Testis (tissue), 5 donors: ENCODE measurements at regions of chr2 and their contacts with region 1.

Region 1: GRCh38 chr2:113138428-113139322 is 11.3 kb downstream of the IL1RN start:
- DNase-seq: peak; percentile 63
- H3K4me3 ChIP-seq: no peak overlapping the region
- H3K27ac ChIP-seq: no peak overlapping the region
- H3K4me1 ChIP-seq: no peaks in the 10 kb centered on the region
- H3K27me3 ChIP-seq: no peaks in the 10 kb centered on the region
- CTCF ChIP-seq: peak; percentile 70 to 89 (median 80)
- POLR2A ChIP-seq: no peak

Region 2: GRCh38 chr2:113203901-113204519 is 65.3 kb after region 1 on chr2:
- intact Hi-C with region 1: loop called (anchors 10 kb)
- DNase-seq: peak; percentile 84
- H3K4me3 ChIP-seq: no peak overlapping the region
- H3K27ac ChIP-seq: no peak overlapping the region
- H3K4me1 ChIP-seq: no peaks in the 10 kb centered on the region
- H3K27me3 ChIP-seq: no peaks in the 10 kb centered on the region
- CTCF ChIP-seq: peak; percentile 62 to 72 (median 66)
- POLR2A ChIP-seq: no peak

Region 3: DNA sequence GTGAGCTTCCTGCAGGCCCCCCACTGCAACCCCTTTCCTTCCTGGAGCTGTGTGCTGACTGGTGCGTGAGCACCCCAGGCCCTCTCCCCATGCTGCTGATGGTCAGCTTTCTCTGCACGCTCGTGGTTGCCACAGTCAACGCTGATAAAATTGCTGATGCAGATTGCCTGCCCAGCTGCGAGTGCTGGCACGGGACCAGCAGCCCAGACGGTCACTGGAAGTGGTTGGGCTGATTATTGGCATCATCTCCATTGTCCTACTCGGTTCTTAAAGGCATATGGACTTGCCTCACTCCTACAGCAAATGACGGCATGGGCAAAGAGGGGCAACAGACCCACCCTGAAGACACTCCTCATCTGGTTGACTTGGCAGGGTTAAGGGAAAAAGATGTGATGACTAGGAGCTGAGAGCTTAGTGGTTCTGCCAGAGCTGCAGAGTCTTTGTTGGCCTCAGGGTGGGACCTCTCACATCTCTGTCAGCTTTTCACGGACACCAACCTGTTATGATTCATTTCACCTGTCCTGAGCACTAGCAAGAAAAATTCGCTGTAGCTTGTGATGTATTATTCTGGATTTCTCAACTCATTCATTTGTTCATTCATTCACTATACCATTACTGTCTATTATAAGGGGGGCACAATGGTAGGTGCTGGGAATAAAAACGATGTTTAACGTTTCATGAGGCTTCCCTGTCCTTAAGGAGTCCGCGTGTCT is 101.6 kb after region 1 on chr2:
- intact Hi-C with region 1: no loop called
- DNase-seq: peak; percentile 88
- H3K4me3 ChIP-seq: no peak overlapping the region
- H3K27ac ChIP-seq: peak overlapping the region in 1 of 2 donors; percentile 30
- H3K4me1 ChIP-seq: peaks cover 11% of the 10 kb centered on the region
- H3K27me3 ChIP-seq: no peaks in the 10 kb centered on the region
- CTCF ChIP-seq: no peak
- POLR2A ChIP-seq: no peak

Region 4: DNA sequence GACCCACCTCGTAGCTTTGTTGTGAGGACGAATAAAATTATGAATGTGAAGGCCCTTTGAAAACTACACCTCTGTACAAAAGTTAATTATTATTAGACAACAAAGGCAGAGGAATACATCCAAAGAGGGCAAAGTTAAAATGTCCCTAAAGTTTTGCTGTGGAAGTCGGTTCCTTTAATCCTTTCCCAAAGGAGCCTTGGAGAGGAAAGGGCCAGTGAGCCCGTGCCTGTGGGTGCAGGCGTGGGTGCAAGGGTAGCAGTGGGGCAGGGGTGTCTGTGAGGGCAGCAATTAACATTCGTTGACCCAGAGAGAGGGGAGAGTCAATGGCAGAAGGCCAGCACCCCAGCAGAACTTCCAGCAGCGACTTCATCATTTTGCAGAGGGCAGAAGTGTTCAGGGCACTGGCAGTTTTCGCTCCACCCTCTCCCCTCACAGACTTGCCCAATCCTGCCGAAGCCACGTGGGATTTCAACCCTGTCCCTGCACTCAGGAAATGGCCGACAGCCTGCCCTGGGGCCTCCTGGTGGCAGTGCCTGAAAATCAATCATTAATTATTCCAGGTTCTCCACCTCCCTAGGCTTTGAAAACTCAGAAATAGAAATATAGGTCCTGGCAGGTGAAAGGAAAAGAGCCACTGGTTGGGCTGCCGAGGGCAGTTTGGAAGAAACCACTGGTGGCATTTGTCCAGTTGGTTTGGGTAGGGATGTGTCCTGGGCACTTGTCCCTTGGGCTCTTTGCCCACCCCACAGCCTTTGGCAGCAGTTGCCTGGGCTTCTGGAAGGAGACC is 144.3 kb after region 1 on chr2:
- intact Hi-C with region 1: no loop called
- DNase-seq: no peak
- H3K4me3 ChIP-seq: no peak overlapping the region
- H3K27ac ChIP-seq: no peak overlapping the region
- H3K4me1 ChIP-seq: peaks cover 2% of the 10 kb centered on the region
- H3K27me3 ChIP-seq: no peaks in the 10 kb centered on the region
- CTCF ChIP-seq: peak in 1 of 3 experiments; percentile 14
- POLR2A ChIP-seq: no peak

Region 5: DNA sequence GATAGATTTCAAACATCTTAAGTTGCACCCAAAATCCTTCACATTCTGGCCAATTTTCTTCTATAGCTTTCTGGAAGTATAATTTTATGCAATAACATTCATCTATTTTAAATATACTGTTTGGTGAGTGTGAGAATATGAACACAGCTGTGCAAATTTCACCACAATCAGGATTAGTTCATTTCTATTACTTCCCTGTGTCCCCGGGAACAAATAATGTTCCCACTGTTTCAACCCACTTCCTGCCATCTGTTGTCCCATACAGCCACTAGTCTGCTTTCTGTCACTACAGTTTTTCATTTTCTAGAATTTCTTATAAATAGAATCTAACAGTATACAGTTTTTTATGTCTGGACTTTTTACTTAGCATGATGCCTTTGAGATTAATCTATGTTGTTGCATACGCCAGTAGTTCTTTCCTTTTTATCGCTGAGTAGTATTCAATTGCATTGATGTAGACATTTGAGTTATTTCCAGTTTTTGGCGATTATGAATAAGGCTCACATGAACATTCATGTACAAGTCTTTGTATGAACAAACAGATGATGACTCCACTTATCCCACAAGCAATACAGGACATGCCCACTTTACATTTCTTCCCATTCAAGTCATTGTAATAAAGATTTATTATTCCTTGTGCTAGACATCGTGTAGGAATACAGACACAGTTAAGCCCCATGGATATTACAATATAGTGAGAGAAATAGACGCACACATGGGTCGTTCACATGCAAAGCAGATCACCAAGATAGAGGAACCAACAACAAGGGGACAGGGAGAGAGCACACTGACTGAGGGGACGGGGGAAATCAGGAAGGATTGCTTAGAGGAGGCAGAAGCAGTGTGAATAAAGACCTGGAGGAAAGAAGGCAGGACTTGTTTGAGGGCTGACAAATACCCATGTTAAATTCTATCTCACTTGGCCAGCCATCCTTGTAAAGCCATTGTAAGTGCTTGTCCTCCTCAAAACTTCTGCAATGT is 213.0 kb after region 1 on chr2:
- intact Hi-C with region 1: no loop called
- DNase-seq: no peak
- H3K4me3 ChIP-seq: no peak overlapping the region
- H3K27ac ChIP-seq: no peak overlapping the region
- H3K4me1 ChIP-seq: no peaks in the 10 kb centered on the region
- H3K27me3 ChIP-seq: no peaks in the 10 kb centered on the region
- CTCF ChIP-seq: no peak
- POLR2A ChIP-seq: no peak